ENCODE measurements at regions of chr11 and their contacts with region 1.

Region 1: DNA sequence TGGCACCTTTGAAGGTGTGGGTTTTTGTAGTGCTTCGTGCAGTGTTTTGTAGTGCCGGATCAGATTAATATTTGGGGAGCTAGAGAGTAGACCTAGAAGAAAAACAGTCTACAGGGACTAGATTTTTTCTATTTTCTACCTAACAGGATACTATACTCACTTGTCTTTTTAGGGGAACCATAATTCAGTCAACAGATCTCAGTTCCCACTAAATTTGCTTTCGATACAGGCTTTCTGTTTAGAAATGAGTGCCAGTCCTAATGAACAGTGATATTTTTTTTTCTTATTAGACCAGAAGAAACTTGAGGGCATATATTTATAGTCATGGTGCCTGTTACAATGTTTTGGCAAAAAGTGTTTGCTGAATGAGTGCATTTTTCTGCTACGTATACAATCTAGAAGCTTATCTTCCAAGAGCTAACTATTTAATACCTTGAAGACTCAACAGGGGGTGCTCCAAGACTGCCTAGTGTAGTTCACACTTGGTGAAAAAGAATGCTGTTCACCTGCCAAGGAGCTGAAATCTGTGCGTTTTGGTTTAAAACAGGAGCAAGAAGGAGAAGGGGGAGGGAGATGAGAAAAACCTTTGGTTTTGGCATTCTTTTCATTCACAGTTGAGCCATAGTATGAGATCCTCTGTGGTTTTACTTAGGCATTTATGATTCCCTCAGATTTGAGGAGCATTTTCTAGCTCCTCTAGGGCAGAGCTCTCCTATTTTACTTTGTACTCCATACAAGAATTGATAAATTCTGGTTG is 44.9 kb upstream of the VSTM5 start:
- DNase-seq: peak; percentile 95
- ATAC-seq: peak; percentile 98
- H3K4me3 ChIP-seq: no peak overlapping the region
- H3K27ac ChIP-seq: no peak overlapping the region
- H3K4me1 ChIP-seq: no peaks in the 10 kb centered on the region
- H3K27me3 ChIP-seq: no peaks in the 10 kb centered on the region
- CTCF ChIP-seq: peak; percentile 97

Region 2: DNA sequence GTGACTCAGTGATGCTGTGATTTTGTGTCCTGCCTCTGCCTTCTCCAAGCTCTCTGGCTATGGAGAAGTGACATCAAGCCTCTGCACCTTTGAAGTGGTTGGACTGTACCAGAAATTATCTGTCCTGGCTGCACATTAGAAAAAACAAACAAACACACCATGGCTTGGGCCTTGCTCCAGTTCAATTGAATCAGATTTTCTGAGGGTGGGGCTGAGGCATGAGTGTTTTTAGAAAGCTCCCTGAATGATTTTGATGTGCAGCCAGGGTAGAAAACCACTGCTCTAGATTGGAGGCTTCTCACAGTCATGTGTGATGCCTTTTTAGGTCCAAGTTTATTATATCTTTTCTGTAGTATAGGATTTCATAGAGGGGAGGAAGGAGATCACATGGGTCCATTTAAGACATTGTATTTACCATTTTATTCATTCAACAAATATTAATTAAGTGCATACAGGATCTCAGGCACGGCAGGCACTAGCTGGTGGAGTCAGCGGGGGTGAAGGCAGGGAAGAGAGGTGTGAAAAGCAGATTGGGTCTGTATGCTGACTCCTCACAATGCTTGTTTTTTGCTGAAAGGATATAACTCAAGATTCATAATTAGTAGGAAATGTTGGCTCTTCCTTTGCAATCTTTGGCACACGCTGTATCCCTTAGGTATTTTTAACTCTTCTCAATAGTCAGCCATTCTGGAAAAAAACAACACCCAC is 37.7 kb before region 1 on chr11:
- CTCF ChIA-PET with region 1: interaction called, 4 read pairs
- POLR2A ChIA-PET with region 1: interaction called, 12 read pairs
- intact Hi-C with region 1: loop called (anchors 5 kb)
- DNase-seq: peak; percentile 22
- ATAC-seq: peak; percentile 83
- H3K4me3 ChIP-seq: no peak overlapping the region
- H3K27ac ChIP-seq: no peak overlapping the region
- H3K4me1 ChIP-seq: peaks cover 4% of the 10 kb centered on the region; the same call in 1 of the 2 replicates
- H3K27me3 ChIP-seq: no peaks in the 10 kb centered on the region
- CTCF ChIP-seq: no peak

Region 3: DNA sequence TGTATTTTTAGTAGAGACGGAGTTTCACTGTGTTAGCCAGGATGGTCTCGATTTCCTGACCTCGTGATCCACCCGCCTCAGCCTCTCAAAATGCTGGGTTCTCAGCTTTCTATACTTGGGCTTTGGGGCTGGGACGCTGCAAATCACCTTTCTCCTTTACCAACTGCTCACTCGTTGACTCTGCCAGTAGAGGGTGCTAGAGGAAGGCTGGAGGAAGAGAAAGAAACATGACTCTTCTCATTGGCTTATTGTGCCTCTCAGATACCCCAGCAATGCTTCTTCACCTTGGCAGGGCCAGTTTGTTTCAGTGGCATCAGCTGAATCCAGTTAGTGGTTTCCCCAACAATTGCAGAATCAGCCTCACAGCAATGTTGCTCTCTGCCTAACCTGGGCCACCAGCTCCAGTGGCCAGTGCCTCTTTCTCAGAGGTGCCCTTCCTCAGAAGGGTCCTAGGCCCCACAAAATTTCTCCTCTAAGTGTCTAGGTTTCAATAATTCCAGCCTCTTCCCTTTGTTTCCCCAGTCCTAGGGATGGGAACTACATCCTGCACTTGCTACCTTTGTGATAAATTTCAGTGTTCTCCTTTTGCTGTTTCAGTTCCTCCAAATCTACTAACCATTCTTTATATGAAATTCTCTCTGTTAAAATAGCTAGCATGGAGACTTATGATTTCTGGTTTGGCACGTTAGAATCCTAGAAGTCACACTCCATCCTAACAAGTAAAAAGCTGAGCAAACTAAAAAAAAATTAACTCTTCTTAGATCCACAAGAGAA is 26.6 kb after region 1 on chr11:
- CTCF ChIA-PET with region 1: interaction called, 13 read pairs
- POLR2A ChIA-PET with region 1: no interaction called
- intact Hi-C with region 1: no loop called
- DNase-seq: peak; percentile 92
- ATAC-seq: peak; percentile 97
- H3K4me3 ChIP-seq: no peak overlapping the region
- H3K27ac ChIP-seq: no peak overlapping the region
- H3K4me1 ChIP-seq: peaks cover 4% of the 10 kb centered on the region; the same call in 1 of the 2 replicates
- H3K27me3 ChIP-seq: no peaks in the 10 kb centered on the region
- CTCF ChIP-seq: peak; percentile 91

Region 4: DNA sequence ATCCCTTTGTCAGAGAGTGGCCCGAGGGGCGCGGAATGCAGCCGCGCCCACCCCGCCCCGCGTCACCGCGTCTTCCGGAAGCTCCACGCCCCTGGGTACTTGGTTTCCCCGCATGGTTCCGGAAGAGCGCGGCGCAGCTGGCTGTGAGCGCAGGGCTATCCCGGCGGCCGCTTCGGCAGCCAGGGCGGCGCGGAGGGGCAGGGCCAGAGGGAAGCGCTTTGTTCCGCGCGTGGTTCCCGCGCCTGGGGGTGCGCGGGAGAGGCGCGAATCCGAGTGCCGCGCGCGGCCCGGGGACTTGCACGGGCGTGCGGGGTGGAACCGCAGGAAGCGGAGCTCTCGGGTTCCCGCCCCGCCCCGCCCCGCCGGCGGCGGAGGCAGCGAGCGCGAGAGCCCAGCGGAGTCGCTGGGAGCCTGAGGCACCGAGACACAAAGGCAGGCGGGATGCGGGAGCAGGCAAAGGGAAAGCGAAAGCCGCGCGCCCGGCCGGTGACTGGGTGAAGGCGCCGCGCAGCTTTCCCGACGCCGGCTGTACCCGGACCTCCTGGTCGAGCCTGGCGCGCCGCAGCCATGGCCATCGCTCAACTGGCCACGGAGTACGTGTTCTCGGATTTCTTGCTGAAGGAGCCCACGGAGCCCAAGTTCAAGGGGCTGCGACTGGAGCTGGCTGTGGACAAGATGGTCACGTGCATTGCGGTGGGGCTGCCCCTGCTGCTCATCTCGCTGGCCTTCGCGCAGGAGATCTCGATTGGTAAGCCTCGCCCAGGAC is 233.6 kb after region 1 on chr11 and contains the start of gene PANX1:
- CTCF ChIA-PET with region 1: interaction called, 7 read pairs
- POLR2A ChIA-PET with region 1: no interaction called
- intact Hi-C with region 1: loop called (anchors 1 kb)
- DNase-seq: peak; percentile 94
- ATAC-seq: peak; percentile 79
- H3K4me3 ChIP-seq: peak within 1 kb of the TSS; percentile 94
- H3K27ac ChIP-seq: peak within 1 kb of the TSS; percentile 91
- H3K4me1 ChIP-seq: peaks cover 55% of the 10 kb centered on the region
- H3K27me3 ChIP-seq: no peaks in the 10 kb centered on the region
- CTCF ChIP-seq: no peak
- total RNA-seq, gene PANX1: 62.9 and 67.7 TPM in 2 replicates

Region 5: GRCh38 chr11:94417386-94417987 is 522.2 kb after region 1 on chr11:
- CTCF ChIA-PET with region 1: interaction called, 32 read pairs
- POLR2A ChIA-PET with region 1: no interaction called
- intact Hi-C with region 1: loop called (anchors 1 kb)
- DNase-seq: peak; percentile 71
- ATAC-seq: peak; percentile 73
- H3K4me3 ChIP-seq: no peak overlapping the region
- H3K27ac ChIP-seq: no peak overlapping the region
- H3K4me1 ChIP-seq: no peaks in the 10 kb centered on the region
- H3K27me3 ChIP-seq: no peaks in the 10 kb centered on the region
- CTCF ChIP-seq: peak; percentile 84

Region 6: GRCh38 chr11:94602430-94603372 is 707.4 kb after region 1 on chr11:
- CTCF ChIA-PET with region 1: no interaction called
- POLR2A ChIA-PET with region 1: no interaction called
- intact Hi-C with region 1: loop called (anchors 1 kb)
- DNase-seq: peak; percentile 82
- ATAC-seq: peak; percentile 99
- H3K4me3 ChIP-seq: no peak overlapping the region
- H3K27ac ChIP-seq: no peak overlapping the region
- H3K4me1 ChIP-seq: no peaks in the 10 kb centered on the region
- H3K27me3 ChIP-seq: no peaks in the 10 kb centered on the region
- CTCF ChIP-seq: peak; percentile 79

Measured in PC-3 (cell line).